Aorta (tissue), 5 donors: ENCODE measurements at regions of chr16 and their contacts with region 1.

Region 1: GRCh38 chr16:3503523-3503922 is 2.7 kb downstream of the CLUAP1 start:
- DNase-seq: peak in 1 of 2 donors; percentile 12
- ATAC-seq: no peak
- H3K4me3 ChIP-seq: no peak overlapping the region
- H3K27ac ChIP-seq: no peak overlapping the region
- H3K4me1 ChIP-seq: no peaks in the 10 kb centered on the region
- H3K27me3 ChIP-seq: no peaks in the 10 kb centered on the region

Region 2: GRCh38 chr16:3457434-3458252 is 45.9 kb before region 1 on chr16:
- intact Hi-C with region 1: loop called in 1 of 2 experiments (anchors 5 kb)
- DNase-seq: peak; percentile 93 to 95
- ATAC-seq: peak; percentile 97
- H3K4me3 ChIP-seq: peak overlapping the region; percentile 84 to 91
- H3K27ac ChIP-seq: peak overlapping the region; percentile 46 to 92
- H3K4me1 ChIP-seq: no peaks in the 10 kb centered on the region
- H3K27me3 ChIP-seq: no peaks in the 10 kb centered on the region

Region 3: DNA sequence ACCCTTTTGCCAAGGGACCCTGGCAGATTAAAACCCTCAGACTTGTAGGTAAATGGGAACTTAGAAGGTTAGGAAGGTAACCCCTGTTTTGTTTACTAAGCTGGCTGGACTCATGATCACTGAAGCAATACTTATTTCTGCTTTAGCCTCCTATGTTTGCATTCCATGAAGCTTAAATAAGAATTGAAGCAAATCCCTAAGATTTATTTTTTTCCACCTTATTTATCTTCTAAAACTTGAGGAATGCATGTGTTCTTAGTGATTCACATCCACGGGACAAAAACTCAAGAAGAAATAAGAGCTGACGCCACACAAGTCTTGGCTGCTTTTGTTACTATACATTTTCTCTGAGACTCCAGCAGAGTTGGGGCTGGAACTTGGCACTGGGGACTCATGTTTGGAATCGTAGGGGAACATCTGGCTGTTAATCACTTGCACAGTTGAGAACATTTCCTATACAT is 32.8 kb after region 1 on chr16:
- intact Hi-C with region 1: no loop called
- DNase-seq: no peak
- ATAC-seq: no peak
- H3K4me3 ChIP-seq: no peak overlapping the region
- H3K27ac ChIP-seq: peak overlapping the region; percentile 89 to 91
- H3K4me1 ChIP-seq: peaks cover 0 to 5% of the 10 kb centered on the region in 2 donors
- H3K27me3 ChIP-seq: no peaks in the 10 kb centered on the region